A549 (cell line): ENCODE measurements at regions of chr11 and their contacts with region 1.

Region 1: DNA sequence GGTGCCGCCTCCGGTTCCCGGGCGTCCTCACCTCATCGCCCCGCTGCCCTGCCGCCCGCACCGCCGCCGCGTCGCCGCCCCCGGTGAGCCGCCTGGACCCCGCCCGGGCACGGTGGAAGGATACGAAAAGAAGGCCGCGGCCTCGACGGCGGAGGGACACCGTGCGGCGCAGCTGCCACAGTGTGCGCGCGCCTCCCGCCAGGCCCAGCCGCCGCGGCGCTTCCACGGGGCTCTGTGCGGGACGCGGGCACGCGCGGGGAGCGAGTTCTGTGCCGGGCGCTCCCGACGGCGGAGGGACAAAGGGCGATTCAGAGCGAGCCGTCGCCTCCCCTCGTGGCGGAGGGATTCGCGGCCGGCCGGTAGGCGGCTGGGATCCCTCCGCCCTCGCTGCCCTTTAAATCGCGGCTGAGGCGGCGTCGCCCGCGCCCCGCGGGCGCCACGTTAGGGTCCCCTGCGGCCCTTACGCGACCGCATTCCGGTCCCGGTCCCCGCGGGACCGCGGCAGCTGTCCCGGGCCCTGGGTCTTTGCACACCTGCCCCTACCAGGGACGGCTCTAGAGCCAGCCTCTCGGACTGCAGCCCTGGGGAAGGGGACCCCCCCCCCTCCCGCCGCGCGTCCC is 569 bp upstream of the KMT5B start:
- DNase-seq: peak; percentile 66 to 98
- ATAC-seq: peak; percentile 52 to 62
- H3K4me3 ChIP-seq: peak overlapping the region; percentile 91
- H3K27ac ChIP-seq: peak overlapping the region; percentile 100
- H3K4me1 ChIP-seq: peaks cover 23% of the 10 kb centered on the region
- CTCF ChIP-seq: no peak
- EP300 ChIP-seq: no peak
- POLR2A ChIP-seq: peak; percentile 98
- RAD21 ChIP-seq: no peak

Region 2: DNA sequence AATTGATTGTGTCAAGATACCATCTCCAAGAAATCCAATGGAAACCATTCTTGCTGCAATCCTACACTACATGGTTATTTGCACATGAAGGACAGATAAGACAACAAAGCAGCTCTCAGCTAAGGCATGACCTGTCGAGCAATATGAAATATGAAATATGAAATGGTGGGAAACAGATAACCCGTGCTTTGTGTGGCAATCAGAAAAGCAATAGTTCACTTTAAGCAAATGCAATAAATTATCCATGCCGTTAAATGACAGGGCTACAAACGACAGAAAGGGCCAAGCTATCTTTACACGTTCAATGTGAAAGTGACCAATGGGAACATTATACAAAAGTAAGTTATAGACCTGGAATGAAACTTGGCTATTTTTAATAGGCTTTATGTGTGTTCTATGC is 35.8 kb before region 1 on chr11:
- CTCF ChIA-PET with region 1: interaction called, 14 read pairs
- POLR2A ChIA-PET with region 1: no interaction called
- DNase-seq: no peak
- ATAC-seq: no peak
- H3K4me3 ChIP-seq: no peak overlapping the region
- H3K27ac ChIP-seq: no peak overlapping the region
- H3K4me1 ChIP-seq: no peaks in the 10 kb centered on the region
- CTCF ChIP-seq: no peak
- EP300 ChIP-seq: no peak
- POLR2A ChIP-seq: no peak
- RAD21 ChIP-seq: no peak

Region 3: GRCh38 chr11:68199295-68199987 is 14.2 kb before region 1 on chr11:
- CTCF ChIA-PET with region 1: interaction called, 88 read pairs
- POLR2A ChIA-PET with region 1: no interaction called
- DNase-seq: no peak
- ATAC-seq: no peak
- H3K4me3 ChIP-seq: no peak overlapping the region
- H3K27ac ChIP-seq: no peak overlapping the region
- H3K4me1 ChIP-seq: peaks cover 15% of the 10 kb centered on the region; the same call in 2 of the 3 replicates
- CTCF ChIP-seq: no peak
- EP300 ChIP-seq: no peak
- POLR2A ChIP-seq: no peak
- RAD21 ChIP-seq: no peak